Prostate gland (tissue), 2 donors: ENCODE measurements at regions of chr1 and their contacts with region 1.

Region 1: GRCh38 chr1:177274687-177275211 is 104.0 kb downstream of the BRINP2 start:
- DNase-seq: peak; percentile 33
- H3K4me3 ChIP-seq: no peak overlapping the region
- H3K27ac ChIP-seq: no peak overlapping the region
- H3K4me1 ChIP-seq: no peaks in the 10 kb centered on the region
- H3K27me3 ChIP-seq: no peaks in the 10 kb centered on the region
- CTCF ChIP-seq: no peak
- POLR2A ChIP-seq: no peak

Region 2: GRCh38 chr1:177340601-177341067 is 65.9 kb after region 1 on chr1:
- intact Hi-C with region 1: loop called (anchors 10 kb)
- DNase-seq: no peak
- H3K4me3 ChIP-seq: no peak overlapping the region
- H3K27ac ChIP-seq: no peak overlapping the region
- H3K4me1 ChIP-seq: no peaks in the 10 kb centered on the region
- H3K27me3 ChIP-seq: peaks cover 4% of the 10 kb centered on the region
- CTCF ChIP-seq: no peak
- POLR2A ChIP-seq: no peak

Region 3: DNA sequence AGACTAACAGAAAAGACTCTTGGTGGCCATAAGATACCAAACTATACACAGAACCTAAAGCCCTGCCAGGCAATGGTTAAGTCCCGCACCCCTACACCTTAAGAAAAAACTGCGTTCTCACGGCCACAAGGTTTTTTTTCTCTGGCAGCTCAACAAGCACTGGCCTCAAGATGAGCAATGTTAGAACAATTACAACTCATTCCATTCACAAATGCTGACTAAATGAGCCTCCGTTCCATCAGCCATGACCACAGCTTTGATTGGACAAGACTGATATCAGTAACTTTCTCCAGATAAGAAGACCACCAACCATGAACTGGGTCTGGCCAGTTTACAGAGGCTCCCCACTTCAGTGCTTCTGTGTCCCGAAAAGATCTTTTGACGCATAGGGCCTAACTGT is 663.2 kb after region 1 on chr1:
- intact Hi-C with region 1: loop called (anchors 5 kb)
- DNase-seq: no peak
- H3K4me3 ChIP-seq: no peak overlapping the region
- H3K27ac ChIP-seq: no peak overlapping the region
- H3K4me1 ChIP-seq: no peaks in the 10 kb centered on the region
- H3K27me3 ChIP-seq: no peaks in the 10 kb centered on the region
- CTCF ChIP-seq: no peak
- POLR2A ChIP-seq: no peak